Activated CD8-positive, alpha-beta T cell treated with anti-CD3 and anti-CD28 coated beads, Interleukin-2, amount 10 ng/mL, durations not matched to agents 7 days and 5 days (primary cell): ENCODE measurements at regions of chr3 and their contacts with region 1.

Region 1: GRCh38 chr3:52892625-52893311 is 4.6 kb downstream of the STIMATE start:
- DNase-seq: no peak
- ATAC-seq: no peak
- H3K4me3 Mint-ChIP-seq: peak overlapping the region; percentile 72
- H3K27ac Mint-ChIP-seq: peak overlapping the region; percentile 80
- H3K4me1 Mint-ChIP-seq: peaks cover 60% of the 10 kb centered on the region
- H3K27me3 Mint-ChIP-seq: no peaks in the 10 kb centered on the region

Region 2: GRCh38 chr3:52904552-52904951 is 11.8 kb after region 1 on chr3:
- CTCF ChIA-PET with region 1: interaction called, 17 read pairs
- POLR2A ChIA-PET with region 1: no interaction called
- DNase-seq: no peak
- ATAC-seq: no peak
- H3K4me3 Mint-ChIP-seq: no peak overlapping the region
- H3K27ac Mint-ChIP-seq: no peak overlapping the region
- H3K4me1 Mint-ChIP-seq: no peaks in the 10 kb centered on the region
- H3K27me3 Mint-ChIP-seq: no peaks in the 10 kb centered on the region